CD14-positive monocyte (primary cell): ENCODE measurements at regions of chr16 and their contacts with region 1.

Region 1: GRCh38 chr16:66516808-66517585 is 32.9 kb downstream of the TK2 start:
- DNase-seq: peak; percentile 99 to 100 (median 99)
- H3K4me3 ChIP-seq: peak overlapping the region; percentile 24 to 68 (median 41)
- H3K4me3 Mint-ChIP-seq: peak overlapping the region; percentile 81 to 93
- H3K27ac ChIP-seq: peak overlapping the region; percentile 99
- H3K27ac Mint-ChIP-seq: peak overlapping the region; percentile 99 to 100 (median 100)
- H3K4me1 ChIP-seq: peaks cover 88 to 91% of the 10 kb centered on the region in 2 donors
- H3K4me1 Mint-ChIP-seq: peaks cover 92% of the 10 kb centered on the region
- H3K27me3 ChIP-seq: no peaks in the 10 kb centered on the region
- H3K27me3 Mint-ChIP-seq: peaks cover 0 to 2% (median 0%) of the 10 kb centered on the region in 3 donors
- CTCF ChIP-seq: no peak

Region 2: DNA sequence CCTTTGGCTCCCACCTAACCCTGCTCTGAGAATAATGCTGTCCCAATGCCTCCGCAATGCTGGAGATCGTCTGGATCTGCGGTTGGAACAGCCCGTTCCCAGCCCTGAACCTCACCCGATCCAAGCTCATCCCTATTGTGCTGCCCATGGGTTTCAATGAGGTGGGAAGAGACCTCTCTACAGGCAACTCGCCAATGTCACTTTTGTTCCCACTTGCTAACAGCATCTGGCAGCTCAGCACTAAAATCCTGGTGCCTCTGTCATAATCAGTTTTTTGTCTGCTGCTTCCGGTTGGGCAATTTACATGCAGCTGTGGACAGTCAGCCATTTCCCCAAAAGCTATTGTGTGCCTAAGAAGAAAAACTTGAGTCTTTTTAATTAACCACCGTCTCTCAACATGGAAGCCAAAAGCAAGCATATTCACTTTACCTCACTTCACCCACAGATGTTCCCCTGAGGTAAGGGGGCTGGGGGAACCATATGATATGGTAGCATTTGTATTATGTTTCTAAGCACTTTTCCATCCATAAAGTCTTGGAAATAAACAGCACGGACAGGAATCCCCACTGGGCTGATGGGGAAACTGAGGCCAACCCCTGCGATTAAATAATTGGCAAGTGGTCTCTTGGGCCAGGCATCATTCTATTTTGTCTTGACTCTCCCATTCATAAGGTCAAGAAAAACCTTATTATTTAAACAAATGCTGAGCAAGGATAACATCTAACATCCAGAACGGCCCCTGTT is 309.7 kb before region 1 on chr16:
- intact Hi-C with region 1: loop called in 1 of 2 experiments (anchors 10 kb)
- DNase-seq: peak; percentile 81 to 94 (median 91)
- H3K4me3 ChIP-seq: peak overlapping the region in 1 of 3 experiments; percentile 59
- H3K4me3 Mint-ChIP-seq: peak overlapping the region; percentile 44 to 83
- H3K27ac ChIP-seq: peak overlapping the region; percentile 80 to 92
- H3K27ac Mint-ChIP-seq: peak overlapping the region; percentile 92 to 99 (median 98)
- H3K4me1 ChIP-seq: peaks cover 45 to 55% of the 10 kb centered on the region in 2 donors
- H3K4me1 Mint-ChIP-seq: peaks cover 46% of the 10 kb centered on the region
- H3K27me3 ChIP-seq: no peaks in the 10 kb centered on the region
- H3K27me3 Mint-ChIP-seq: peaks cover 0 to 2% (median 0%) of the 10 kb centered on the region in 3 donors
- CTCF ChIP-seq: no peak